Activated T-helper 1 cell treated with anti-CD3 and anti-CD28 coated beads, Interleukin-12 subunit alpha, Interleukin-12 subunit beta, Interleukin-2, Interleukin-4 antibody, amounts not matched to agents 30 ng/mL and 10 ng/mL and 1 ng/mL, durations not matched to agents 14 hours and 24 hours and 36 hours (primary cell): ENCODE measurements at regions of chr6 and their contacts with region 1.

Region 1: GRCh38 chr6:34608321-34609091 is 52.4 kb upstream of the SPDEF start:
- DNase-seq: no peak
- H3K4me3 Mint-ChIP-seq: no peak overlapping the region
- H3K27ac Mint-ChIP-seq: no peak overlapping the region
- H3K4me1 Mint-ChIP-seq: peaks cover 36% of the 10 kb centered on the region
- H3K27me3 Mint-ChIP-seq: no peaks in the 10 kb centered on the region

Region 2: DNA sequence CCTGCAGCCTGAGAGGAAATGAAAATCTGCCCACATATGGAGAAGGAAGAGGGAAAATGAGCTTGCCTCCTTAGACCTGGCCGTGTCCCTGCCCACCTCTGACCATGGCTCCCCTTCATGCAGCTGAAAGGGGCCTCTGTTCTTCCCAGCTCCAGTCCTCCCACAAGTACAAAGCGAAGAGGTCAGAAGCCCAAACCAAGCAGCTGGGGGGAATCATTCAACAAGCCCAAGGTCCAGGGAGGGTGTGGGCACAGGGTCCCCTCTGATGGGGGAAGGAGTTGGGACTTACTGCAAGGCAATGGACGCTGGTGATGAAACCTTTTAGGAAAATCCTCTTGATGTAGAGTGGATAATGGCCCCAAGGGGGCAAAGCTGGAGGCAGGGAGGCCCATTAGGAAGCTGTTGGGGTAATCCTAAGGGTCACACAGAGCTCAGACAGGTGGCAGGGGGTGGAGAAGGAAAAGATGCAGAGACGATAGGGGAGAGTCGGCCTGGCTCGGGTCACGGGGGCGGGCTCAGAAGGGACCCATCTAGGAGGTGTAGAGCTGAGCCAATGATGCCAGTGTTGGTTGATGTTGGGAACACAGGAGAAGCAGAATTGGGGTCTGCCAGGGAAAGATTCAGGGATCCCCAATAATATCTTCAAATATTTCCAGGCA is 446.5 kb before region 1 on chr6:
- intact Hi-C with region 1: loop called (anchors 1 kb)
- DNase-seq: no peak
- H3K4me3 Mint-ChIP-seq: no peak overlapping the region
- H3K27ac Mint-ChIP-seq: no peak overlapping the region
- H3K4me1 Mint-ChIP-seq: no peaks in the 10 kb centered on the region
- H3K27me3 Mint-ChIP-seq: peaks cover 20% of the 10 kb centered on the region

Region 3: GRCh38 chr6:34392497-34393190 is 215.9 kb before region 1 on chr6 and contains the start of gene NUDT3:
- intact Hi-C with region 1: loop called (anchors 1 kb)
- DNase-seq: peak; percentile 93
- H3K4me3 Mint-ChIP-seq: peak within 1 kb of the TSS; percentile 97
- H3K27ac Mint-ChIP-seq: peak within 1 kb of the TSS; percentile 88
- H3K4me1 Mint-ChIP-seq: peaks cover 18% of the 10 kb centered on the region
- H3K27me3 Mint-ChIP-seq: peaks cover 3% of the 10 kb centered on the region
- total RNA-seq, gene NUDT3: 20.0 and 20.8 TPM in 2 replicates

Region 4: GRCh38 chr6:34459899-34460593 is 148.5 kb before region 1 on chr6:
- intact Hi-C with region 1: loop called (anchors 1 kb)
- DNase-seq: peak; percentile 34
- H3K4me3 Mint-ChIP-seq: no peak overlapping the region
- H3K27ac Mint-ChIP-seq: no peak overlapping the region
- H3K4me1 Mint-ChIP-seq: no peaks in the 10 kb centered on the region
- H3K27me3 Mint-ChIP-seq: peaks cover 13% of the 10 kb centered on the region

Region 5: GRCh38 chr6:34656378-34657036 is 48.0 kb after region 1 on chr6:
- intact Hi-C with region 1: loop called (anchors 1 kb)
- DNase-seq: no peak
- H3K4me3 Mint-ChIP-seq: peak overlapping the region; percentile 79
- H3K27ac Mint-ChIP-seq: peak overlapping the region; percentile 97
- H3K4me1 Mint-ChIP-seq: peaks cover 41% of the 10 kb centered on the region
- H3K27me3 Mint-ChIP-seq: no peaks in the 10 kb centered on the region